ENCODE measurements at regions of chrX and their contacts with region 1.

Region 1: GRCh38 chrX:8748855-8749254 is 16.9 kb upstream of the ANOS1 start:
- DNase-seq: peak; percentile 43
- H3K4me3 Mint-ChIP-seq: no peak overlapping the region
- H3K27ac Mint-ChIP-seq: no peak overlapping the region
- H3K4me1 Mint-ChIP-seq: no peaks in the 10 kb centered on the region
- H3K27me3 Mint-ChIP-seq: peaks cover 7% of the 10 kb centered on the region
- CTCF ChIP-seq: peak; percentile 43

Region 2: GRCh38 chrX:8815464-8816065 is 66.7 kb after region 1 on chrX:
- CTCF ChIA-PET with region 1: interaction called, 31 read pairs
- POLR2A ChIA-PET with region 1: no interaction called
- intact Hi-C with region 1: loop called (anchors 1 kb)
- DNase-seq: peak; percentile 71
- H3K4me3 Mint-ChIP-seq: no peak overlapping the region
- H3K27ac Mint-ChIP-seq: no peak overlapping the region
- H3K4me1 Mint-ChIP-seq: no peaks in the 10 kb centered on the region
- H3K27me3 Mint-ChIP-seq: peaks cover 16% of the 10 kb centered on the region
- CTCF ChIP-seq: peak; percentile 59

Measured in MCF 10A (cell line).